ENCODE measurements at regions of chr4 and their contacts with region 1.

Region 1: DNA sequence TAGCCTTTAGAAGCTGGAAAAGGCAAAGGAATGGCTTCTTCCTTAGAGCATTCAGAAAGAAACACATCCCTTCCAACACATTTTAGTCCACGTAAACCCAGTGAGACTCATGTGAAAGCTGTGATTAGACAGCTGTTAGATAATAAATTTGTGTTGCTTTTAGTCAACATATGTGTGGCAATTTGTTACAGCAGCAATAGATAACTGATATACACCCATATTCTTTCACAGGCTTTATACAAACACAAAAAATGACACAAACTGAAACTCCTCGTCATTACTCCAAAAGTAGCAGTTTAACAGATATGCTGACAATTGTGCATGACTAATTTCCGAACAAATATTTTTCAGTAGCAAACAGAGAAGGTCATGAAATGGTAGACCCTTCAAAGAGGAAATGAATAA is 65.3 kb downstream of the ANTXR2 start:
- DNase-seq: no peak
- H3K4me3 Mint-ChIP-seq: no peak overlapping the region
- H3K27ac Mint-ChIP-seq: peak overlapping the region; percentile 78
- H3K4me1 Mint-ChIP-seq: peaks cover 60% of the 10 kb centered on the region
- H3K27me3 Mint-ChIP-seq: no peaks in the 10 kb centered on the region

Region 2: GRCh38 chr4:79678472-79679202 is 329.1 kb before region 1 on chr4:
- intact Hi-C with region 1: loop called (anchors 5 kb)
- DNase-seq: no peak
- H3K4me3 Mint-ChIP-seq: no peak overlapping the region
- H3K27ac Mint-ChIP-seq: peak overlapping the region; percentile 14
- H3K4me1 Mint-ChIP-seq: peaks cover 29% of the 10 kb centered on the region
- H3K27me3 Mint-ChIP-seq: peaks cover 6% of the 10 kb centered on the region

Region 3: GRCh38 chr4:79923281-79923680 is 84.5 kb before region 1 on chr4:
- intact Hi-C with region 1: loop called (anchors 5 kb)
- DNase-seq: no peak
- H3K4me3 Mint-ChIP-seq: no peak overlapping the region
- H3K27ac Mint-ChIP-seq: no peak overlapping the region
- H3K4me1 Mint-ChIP-seq: peaks cover 7% of the 10 kb centered on the region
- H3K27me3 Mint-ChIP-seq: peaks cover 3% of the 10 kb centered on the region

Region 4: DNA sequence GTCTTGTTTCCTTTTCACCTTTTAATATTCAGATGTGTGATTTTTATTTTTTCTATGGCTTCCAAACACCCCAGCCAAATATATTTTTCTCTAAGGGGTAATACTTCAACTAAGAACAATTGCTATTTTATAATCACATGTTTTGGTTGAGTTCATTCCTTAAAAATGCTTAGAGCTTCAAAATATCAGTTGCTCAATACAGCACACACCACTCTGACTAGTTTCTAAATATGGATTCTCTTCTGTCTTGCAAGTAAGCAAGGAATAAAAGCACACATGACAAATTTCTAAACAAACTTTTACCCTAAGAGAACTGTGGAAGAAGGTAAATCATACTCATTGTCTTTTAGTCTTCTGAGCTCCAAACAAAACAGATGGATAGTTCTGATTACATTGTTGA is 38.0 kb after region 1 on chr4:
- intact Hi-C with region 1: no loop called
- DNase-seq: no peak
- H3K4me3 Mint-ChIP-seq: no peak overlapping the region
- H3K27ac Mint-ChIP-seq: no peak overlapping the region
- H3K4me1 Mint-ChIP-seq: peaks cover 5% of the 10 kb centered on the region
- H3K27me3 Mint-ChIP-seq: peaks cover 1% of the 10 kb centered on the region

Region 5: DNA sequence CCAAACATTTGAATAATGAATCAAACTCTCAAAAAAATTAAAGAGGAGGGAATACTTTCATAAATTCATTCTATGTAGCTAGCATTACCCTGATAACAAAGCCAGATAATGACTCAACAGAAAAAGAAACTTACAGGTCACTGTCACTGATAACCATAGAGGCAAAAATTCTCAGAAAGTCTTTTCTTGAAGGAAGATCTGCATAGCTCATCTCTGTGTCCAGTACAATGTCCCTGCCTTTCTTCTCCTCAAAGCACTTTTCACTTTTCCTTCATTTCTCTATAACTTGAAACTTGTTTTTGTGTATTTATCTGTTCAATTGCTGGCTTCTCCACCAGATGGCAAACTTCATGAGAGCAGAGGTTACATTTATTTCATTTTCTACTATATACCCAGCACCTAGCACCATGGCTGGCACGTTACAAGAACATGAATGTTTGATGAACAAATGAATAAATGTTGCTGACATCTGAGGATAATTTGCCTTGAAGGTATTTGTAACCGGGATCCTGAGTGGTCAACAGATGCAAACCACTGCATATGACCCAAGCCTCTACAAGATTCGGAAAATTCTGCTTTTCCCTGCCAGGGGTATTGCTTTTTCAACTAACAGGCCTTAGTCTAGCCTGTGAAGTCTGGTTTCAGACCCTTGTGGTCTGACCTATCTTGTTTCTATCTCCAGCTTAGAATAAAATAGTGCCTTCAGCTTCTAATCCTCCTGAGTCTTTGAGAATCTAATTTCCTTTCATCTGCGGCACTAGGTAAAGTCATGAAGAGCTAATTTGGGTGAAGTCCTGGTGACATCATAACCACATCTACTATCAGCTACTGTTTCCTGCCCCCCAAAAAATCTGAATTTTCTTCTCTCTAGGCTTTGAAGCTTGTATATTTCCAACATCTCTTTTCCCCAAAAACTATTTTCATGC is 117.8 kb after region 1 on chr4:
- intact Hi-C with region 1: loop called (anchors 5 kb)
- DNase-seq: peak; percentile 30
- H3K4me3 Mint-ChIP-seq: peak overlapping the region; percentile 1
- H3K27ac Mint-ChIP-seq: peak overlapping the region; percentile 55
- H3K4me1 Mint-ChIP-seq: peaks cover 59% of the 10 kb centered on the region
- H3K27me3 Mint-ChIP-seq: no peaks in the 10 kb centered on the region

Region 6: DNA sequence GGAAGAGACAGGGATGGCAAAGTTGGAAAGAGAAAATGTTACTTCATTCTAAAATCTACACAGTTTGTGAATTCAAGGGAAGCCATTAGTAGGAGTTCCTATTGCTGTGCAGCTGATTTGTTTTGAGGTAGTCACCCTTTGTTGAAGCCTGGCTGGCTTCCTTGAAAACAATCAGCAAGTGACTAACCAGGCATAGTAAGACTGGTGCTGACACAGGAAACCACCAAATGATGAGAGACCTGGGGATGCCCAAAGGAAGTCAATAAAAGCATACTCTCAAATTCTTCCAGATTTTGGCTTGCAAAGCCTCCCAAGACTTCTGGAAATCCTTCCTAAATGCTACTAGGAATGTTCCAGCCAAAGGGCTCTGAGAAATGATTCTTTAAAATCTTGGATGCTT is 165.7 kb after region 1 on chr4:
- intact Hi-C with region 1: loop called (anchors 2 kb)
- DNase-seq: peak; percentile 53
- H3K4me3 Mint-ChIP-seq: peak overlapping the region; percentile 37
- H3K27ac Mint-ChIP-seq: peak overlapping the region; percentile 89
- H3K4me1 Mint-ChIP-seq: peaks cover 47% of the 10 kb centered on the region
- H3K27me3 Mint-ChIP-seq: no peaks in the 10 kb centered on the region